AG04450 (cell line): ENCODE measurements at regions of chr15 and their contacts with region 1.

Region 1: DNA sequence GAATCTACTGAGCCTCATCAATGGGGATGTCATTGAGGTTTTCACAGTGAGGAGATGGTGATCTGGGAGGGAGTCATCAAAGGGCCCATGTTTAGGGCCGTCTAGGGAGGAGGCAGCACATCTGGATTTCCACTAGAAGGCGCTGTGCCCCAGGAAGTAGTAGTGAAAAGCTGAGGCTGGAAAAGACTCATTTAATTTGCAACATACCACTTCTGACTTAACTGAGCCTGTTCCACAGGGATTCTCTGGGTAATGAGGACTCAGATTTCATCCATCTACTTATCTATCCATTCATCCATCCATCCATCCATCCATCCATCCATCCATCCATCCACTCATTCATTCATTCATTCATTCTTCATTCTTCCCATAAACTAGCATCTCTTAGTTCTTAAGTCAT is 17.4 kb upstream of the SHF start:
- DNase-seq: peak; percentile 21
- H3K4me3 ChIP-seq: no peak overlapping the region
- H3K27ac ChIP-seq: no peak overlapping the region
- H3K27me3 ChIP-seq: peaks cover 3% of the 10 kb centered on the region
- CTCF ChIP-seq: peak; percentile 88

Region 2: DNA sequence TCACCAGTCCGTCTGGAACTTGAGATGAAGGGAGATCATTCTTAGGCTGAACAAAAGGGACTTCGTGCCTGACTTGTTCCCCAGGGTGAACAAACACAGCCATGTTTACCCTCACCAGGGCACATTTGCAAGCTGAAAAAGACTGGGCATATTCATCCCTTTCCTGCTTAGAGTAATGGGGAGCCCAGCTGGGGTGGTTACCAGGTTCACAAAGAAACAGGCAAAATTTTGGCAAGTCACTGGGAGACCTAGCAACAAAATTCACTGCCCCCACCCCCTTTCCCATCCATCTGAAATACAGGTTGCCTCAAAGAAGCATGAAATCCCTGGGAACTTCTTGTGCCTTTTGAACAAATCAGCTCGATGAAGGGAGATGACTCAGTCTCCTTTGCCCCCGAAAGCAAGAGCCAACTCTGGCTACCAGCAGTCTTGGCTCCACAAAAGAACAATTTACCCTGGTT is 1204.7 kb after region 1 on chr15:
- CTCF ChIA-PET with region 1: interaction called, 10 read pairs
- POLR2A ChIA-PET with region 1: no interaction called
- DNase-seq: no peak
- H3K4me3 ChIP-seq: no peak overlapping the region
- H3K27ac ChIP-seq: no peak overlapping the region
- H3K27me3 ChIP-seq: no peaks in the 10 kb centered on the region
- CTCF ChIP-seq: no peak